ENCODE measurements at regions of chr5 and their contacts with region 1.

Region 1: GRCh38 chr5:178392931-178393394 is 160.4 kb upstream of the PHYKPL start:
- DNase-seq: no peak
- H3K4me3 ChIP-seq: no peak overlapping the region
- H3K27ac ChIP-seq: no peak overlapping the region
- H3K4me1 ChIP-seq: no peaks in the 10 kb centered on the region
- H3K27me3 ChIP-seq: no peaks in the 10 kb centered on the region
- CTCF ChIP-seq: no peak
- POLR2A ChIP-seq: no peak

Region 2: GRCh38 chr5:178428341-178428964 is 35.5 kb after region 1 on chr5:
- intact Hi-C with region 1: loop called (anchors 5 kb)
- DNase-seq: peak; percentile 35
- H3K4me3 ChIP-seq: no peak overlapping the region
- H3K27ac ChIP-seq: peak overlapping the region; percentile 66 to 72
- H3K4me1 ChIP-seq: peaks cover 27% of the 10 kb centered on the region
- H3K27me3 ChIP-seq: no peaks in the 10 kb centered on the region
- CTCF ChIP-seq: no peak
- POLR2A ChIP-seq: no peak